ENCODE measurements at regions of chr11 and their contacts with region 1.

Region 1: DNA sequence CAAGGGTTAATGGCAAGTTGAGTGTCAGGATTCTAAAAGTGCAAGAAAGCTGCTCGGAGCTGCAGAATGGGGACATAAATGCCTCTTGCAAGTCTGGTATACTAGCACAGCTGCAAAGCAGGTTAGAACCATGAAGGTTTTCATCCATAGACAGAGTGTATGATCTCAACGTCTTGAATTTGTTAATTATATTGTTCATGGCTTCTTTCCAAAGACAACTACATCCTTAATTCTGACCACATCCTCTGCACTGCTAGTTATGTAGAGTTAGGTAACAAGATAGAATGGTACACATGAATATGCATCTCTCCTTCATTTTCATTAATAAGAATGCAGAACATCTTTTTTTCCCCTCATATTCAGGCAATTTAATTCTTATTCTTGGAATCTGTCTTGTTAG is 34.2 kb downstream of the EXPH5 start:
- DNase-seq: no peak
- ATAC-seq: no peak
- H3K4me3 ChIP-seq: no peak overlapping the region
- H3K27ac ChIP-seq: no peak overlapping the region
- H3K4me1 ChIP-seq: peaks cover 0 to 5% (median 0%) of the 10 kb centered on the region in 12 donors
- H3K27me3 ChIP-seq: no peaks in the 10 kb centered on the region
- CTCF ChIP-seq: no peak
- POLR2A ChIP-seq: no peak

Region 2: DNA sequence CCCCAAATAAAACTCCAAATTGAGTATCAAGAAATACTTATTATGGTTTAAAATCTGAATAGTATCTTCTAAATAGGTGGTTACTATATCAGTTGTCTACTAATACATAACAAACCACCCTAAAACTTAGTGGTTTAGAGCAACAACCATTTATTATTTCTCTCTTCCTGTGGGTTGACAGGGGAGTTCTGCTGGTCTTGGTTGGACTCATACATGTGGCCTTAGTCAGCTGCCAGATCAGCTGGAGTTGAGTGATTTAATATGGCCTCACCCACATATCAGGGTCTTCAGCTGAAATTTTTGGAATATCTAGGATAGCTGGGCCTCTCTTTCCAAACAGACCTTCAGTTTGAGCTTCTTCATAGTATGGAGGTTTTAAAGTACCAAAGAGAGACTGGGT is 126.6 kb before region 1 on chr11:
- intact Hi-C with region 1: loop called in 1 of 10 experiments (anchors 10 kb)
- DNase-seq: no peak
- ATAC-seq: no peak
- H3K4me3 ChIP-seq: no peak overlapping the region
- H3K27ac ChIP-seq: no peak overlapping the region
- H3K4me1 ChIP-seq: no peaks in the 10 kb centered on the region
- H3K27me3 ChIP-seq: no peaks in the 10 kb centered on the region
- CTCF ChIP-seq: no peak
- POLR2A ChIP-seq: no peak

Region 3: DNA sequence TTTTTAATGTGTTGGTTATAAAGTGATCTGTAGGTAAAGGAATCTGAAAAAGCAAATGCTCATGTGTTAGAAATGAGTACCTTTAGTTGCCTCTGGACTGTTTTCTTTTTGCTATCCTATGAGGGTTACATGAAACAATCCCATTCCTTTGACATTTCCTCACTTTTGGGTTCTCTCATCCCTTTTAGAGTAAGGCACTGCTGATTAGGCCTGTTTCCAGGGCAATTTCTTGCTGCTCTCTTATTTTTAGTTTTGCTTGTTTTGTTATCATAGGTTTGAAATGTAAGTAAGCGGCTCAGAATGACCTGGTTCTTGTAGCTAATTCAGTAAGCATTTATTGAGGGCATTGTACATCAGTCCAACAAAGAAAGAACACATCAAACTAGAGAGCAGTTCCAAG is 244.4 kb after region 1 on chr11:
- intact Hi-C with region 1: no loop called
- DNase-seq: no peak
- ATAC-seq: no peak
- H3K4me3 ChIP-seq: no peak overlapping the region
- H3K27ac ChIP-seq: no peak overlapping the region
- H3K4me1 ChIP-seq: peaks cover 0 to 17% (median 0%) of the 10 kb centered on the region in 12 donors
- H3K27me3 ChIP-seq: no peaks in the 10 kb centered on the region
- CTCF ChIP-seq: no peak
- POLR2A ChIP-seq: no peak

Measured in heart left ventricle (tissue), 16 donors.